Activated B cell treated with CpG ODN at 0.5 μM for 24 hours (primary cell): ENCODE measurements at regions of chr4 and their contacts with region 1.

Region 1: DNA sequence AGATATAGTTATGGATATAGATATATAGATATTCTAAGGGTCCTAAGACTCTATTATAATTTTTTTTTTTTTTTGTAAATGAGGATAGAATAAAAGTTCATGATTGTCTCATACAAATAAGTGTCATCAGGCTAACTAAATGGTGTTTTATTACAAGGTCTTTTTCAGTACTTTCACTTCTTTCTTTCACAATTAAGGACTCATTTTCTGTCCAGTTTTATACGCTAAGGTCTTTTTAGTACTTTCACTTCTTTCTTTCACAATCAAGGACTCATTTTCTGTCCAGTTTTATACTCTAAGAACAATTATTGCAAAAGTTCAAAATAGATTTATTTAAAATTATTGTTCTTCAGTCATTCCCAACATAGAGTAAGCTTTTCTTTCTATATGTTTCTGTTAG is 32.7 kb downstream of the RUFY3 start:
- DNase-seq: no peak
- ATAC-seq: peak; percentile 70
- H3K4me3 Mint-ChIP-seq: peak overlapping the region; percentile 65
- H3K27ac Mint-ChIP-seq: peak overlapping the region; percentile 86
- H3K4me1 Mint-ChIP-seq: peaks cover 64% of the 10 kb centered on the region
- H3K27me3 Mint-ChIP-seq: no peaks in the 10 kb centered on the region
- CTCF ChIP-seq: no peak

Region 2: GRCh38 chr4:70687821-70688794 is 66.4 kb before region 1 on chr4 and contains the start of gene UTP3:
- CTCF ChIA-PET with region 1: interaction called, 3 read pairs
- POLR2A ChIA-PET with region 1: interaction called, 5 read pairs
- intact Hi-C with region 1: loop called (anchors 2 kb)
- DNase-seq: peak; percentile 83
- ATAC-seq: peak; percentile 88
- H3K4me3 Mint-ChIP-seq: peak within 1 kb of the TSS; percentile 99
- H3K27ac Mint-ChIP-seq: peak within 1 kb of the TSS; percentile 100
- H3K4me1 Mint-ChIP-seq: peaks cover 48% of the 10 kb centered on the region
- H3K27me3 Mint-ChIP-seq: no peaks in the 10 kb centered on the region
- CTCF ChIP-seq: peak; percentile 96
- total RNA-seq, gene UTP3: 38.5 and 40.1 TPM in 2 replicates

Region 3: GRCh38 chr4:70714079-70714887 is 40.2 kb before region 1 on chr4:
- CTCF ChIA-PET with region 1: no interaction called
- POLR2A ChIA-PET with region 1: interaction called, 8 read pairs
- intact Hi-C with region 1: loop called (anchors 2 kb)
- DNase-seq: no peak
- ATAC-seq: peak; percentile 29
- H3K4me3 Mint-ChIP-seq: peak overlapping the region; percentile 69
- H3K27ac Mint-ChIP-seq: peak overlapping the region; percentile 94
- H3K4me1 Mint-ChIP-seq: peaks cover 60% of the 10 kb centered on the region
- H3K27me3 Mint-ChIP-seq: no peaks in the 10 kb centered on the region
- CTCF ChIP-seq: no peak

Region 4: GRCh38 chr4:70772929-70773555 is 18.6 kb after region 1 on chr4:
- CTCF ChIA-PET with region 1: no interaction called
- POLR2A ChIA-PET with region 1: interaction called, 3 read pairs
- intact Hi-C with region 1: loop called (anchors 2 kb)
- DNase-seq: no peak
- ATAC-seq: no peak
- H3K4me3 Mint-ChIP-seq: no peak overlapping the region
- H3K27ac Mint-ChIP-seq: no peak overlapping the region
- H3K4me1 Mint-ChIP-seq: peaks cover 8% of the 10 kb centered on the region
- H3K27me3 Mint-ChIP-seq: no peaks in the 10 kb centered on the region
- CTCF ChIP-seq: no peak

Region 5: GRCh38 chr4:71472946-71473345 is 718.5 kb after region 1 on chr4:
- CTCF ChIA-PET with region 1: no interaction called
- POLR2A ChIA-PET with region 1: no interaction called
- intact Hi-C with region 1: no loop called
- DNase-seq: no peak
- ATAC-seq: no peak
- H3K4me3 Mint-ChIP-seq: no peak overlapping the region
- H3K27ac Mint-ChIP-seq: no peak overlapping the region
- H3K4me1 Mint-ChIP-seq: no peaks in the 10 kb centered on the region
- H3K27me3 Mint-ChIP-seq: no peaks in the 10 kb centered on the region
- CTCF ChIP-seq: no peak